ENCODE measurements at regions of chr15 and their contacts with region 1.

Region 1: GRCh38 chr15:42315521-42315920 is 42.3 kb upstream of the TMEM87A start:
- DNase-seq: no peak
- H3K4me3 ChIP-seq: no peak overlapping the region
- H3K27ac ChIP-seq: no peak overlapping the region
- H3K4me1 ChIP-seq: no peaks in the 10 kb centered on the region
- H3K27me3 ChIP-seq: no peaks in the 10 kb centered on the region
- CTCF ChIP-seq: no peak

Region 2: GRCh38 chr15:42267286-42267685 is 48.2 kb before region 1 on chr15:
- intact Hi-C with region 1: loop called (anchors 2 kb)
- DNase-seq: no peak
- H3K4me3 ChIP-seq: no peak overlapping the region
- H3K27ac ChIP-seq: no peak overlapping the region
- H3K4me1 ChIP-seq: peaks cover 8 to 20% of the 10 kb centered on the region in 2 donors
- H3K27me3 ChIP-seq: no peaks in the 10 kb centered on the region
- CTCF ChIP-seq: no peak

Measured in ascending aorta (tissue), 2 donors.